Activated CD4-positive, alpha-beta T cell treated with anti-CD3 and anti-CD28 coated beads, Interleukin-2, amount 10 ng/mL, durations not matched to agents 7 days and 5 days (primary cell): ENCODE measurements at regions of chr7 and their contacts with region 1.

Region 1: GRCh38 chr7:134646425-134647305 is at the start of gene BPGM:
- DNase-seq: peak; percentile 98
- H3K4me3 Mint-ChIP-seq: no peak within 1 kb of the TSS
- H3K27ac Mint-ChIP-seq: no peak within 1 kb of the TSS
- H3K4me1 Mint-ChIP-seq: peaks cover 28% of the 10 kb centered on the region
- H3K27me3 Mint-ChIP-seq: no peaks in the 10 kb centered on the region
- total RNA-seq, gene BPGM: 14.6 to 15.5 TPM

Region 2: DNA sequence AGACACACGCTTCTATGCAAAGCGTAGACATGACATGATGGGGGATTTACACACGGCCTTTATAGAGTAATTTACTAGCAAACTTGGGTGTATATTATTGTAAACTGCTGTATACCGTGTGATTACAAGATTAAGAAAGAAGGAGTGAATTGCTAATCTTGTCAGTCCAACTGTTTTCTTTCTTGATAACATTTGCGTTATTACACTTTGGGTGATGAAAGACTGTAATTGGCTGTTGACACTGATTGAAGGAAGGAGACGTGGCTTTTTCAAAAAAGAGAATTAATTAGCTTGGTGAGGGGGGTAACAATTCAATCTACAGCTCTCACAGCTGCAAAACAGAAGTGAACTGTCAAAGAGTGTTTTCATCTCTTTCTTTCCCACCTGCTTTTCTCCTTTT is 362.7 kb before region 1 on chr7:
- CTCF ChIA-PET with region 1: no interaction called
- POLR2A ChIA-PET with region 1: no interaction called
- DNase-seq: no peak
- H3K4me3 Mint-ChIP-seq: no peak overlapping the region
- H3K27ac Mint-ChIP-seq: no peak overlapping the region
- H3K4me1 Mint-ChIP-seq: no peaks in the 10 kb centered on the region
- H3K27me3 Mint-ChIP-seq: peaks cover 6% of the 10 kb centered on the region

Region 3: GRCh38 chr7:134636008-134636449 is 10.6 kb before region 1 on chr7:
- CTCF ChIA-PET with region 1: interaction called, 29 read pairs
- POLR2A ChIA-PET with region 1: no interaction called
- DNase-seq: no peak
- H3K4me3 Mint-ChIP-seq: no peak overlapping the region
- H3K27ac Mint-ChIP-seq: peak overlapping the region; percentile 42
- H3K4me1 Mint-ChIP-seq: peaks cover 42% of the 10 kb centered on the region
- H3K27me3 Mint-ChIP-seq: peaks cover 2% of the 10 kb centered on the region

Region 4: GRCh38 chr7:134660961-134661376 is 14.3 kb after region 1 on chr7:
- CTCF ChIA-PET with region 1: interaction called, 19 read pairs
- POLR2A ChIA-PET with region 1: interaction called, 11 read pairs
- DNase-seq: no peak
- H3K4me3 Mint-ChIP-seq: no peak overlapping the region
- H3K27ac Mint-ChIP-seq: no peak overlapping the region
- H3K4me1 Mint-ChIP-seq: peaks cover 16% of the 10 kb centered on the region
- H3K27me3 Mint-ChIP-seq: no peaks in the 10 kb centered on the region